ENCODE measurements at regions of chr12 and their contacts with region 1.

Region 1: GRCh38 chr12:89352492-89353187 is at the start of gene DUSP6:
- DNase-seq: peak; percentile 99
- H3K4me3 Mint-ChIP-seq: peak within 1 kb of the TSS; percentile 82
- H3K27ac Mint-ChIP-seq: peak within 1 kb of the TSS; percentile 96
- H3K4me1 Mint-ChIP-seq: peaks cover 40% of the 10 kb centered on the region
- H3K27me3 Mint-ChIP-seq: no peaks in the 10 kb centered on the region
- CTCF ChIP-seq: no peak
- total RNA-seq, gene DUSP6: 99.9 and 149 TPM in 2 replicates

Region 2: DNA sequence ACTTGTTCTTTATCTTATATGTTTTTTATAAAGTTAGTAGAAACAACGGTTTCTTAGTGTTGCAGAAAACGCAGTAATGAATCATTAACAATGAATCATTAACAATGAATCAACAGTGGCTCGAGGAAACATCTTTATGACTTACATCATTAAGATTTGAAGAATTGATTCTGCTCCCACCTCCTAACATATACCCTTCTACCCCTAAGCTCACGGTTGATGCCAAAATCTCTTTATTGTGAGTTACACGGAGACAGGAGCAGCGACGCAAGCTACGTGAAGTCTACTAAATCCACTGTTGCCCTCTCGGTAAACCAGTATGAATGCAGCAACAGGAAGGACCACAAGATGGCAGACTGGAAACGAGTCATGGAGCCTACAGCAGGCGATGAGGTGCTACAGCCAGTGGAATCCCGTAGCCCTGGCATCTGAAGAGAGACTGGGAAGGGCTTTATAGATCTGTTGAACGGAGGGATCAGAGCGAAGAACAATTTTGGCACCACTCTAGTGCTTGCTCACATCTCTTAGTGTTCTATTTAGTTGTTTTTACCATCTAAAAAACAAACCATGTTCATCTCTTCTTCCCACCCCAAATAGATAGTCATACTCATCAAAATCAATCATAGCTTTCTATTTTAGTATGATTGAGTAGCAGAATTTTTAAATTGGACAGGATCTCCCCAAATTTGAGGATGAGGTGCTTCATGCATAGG is 333.1 kb before region 1 on chr12:
- CTCF ChIA-PET with region 1: interaction called, 5 read pairs
- POLR2A ChIA-PET with region 1: interaction called, 4 read pairs
- intact Hi-C with region 1: loop called (anchors 1 kb)
- DNase-seq: peak; percentile 90
- H3K4me3 Mint-ChIP-seq: no peak overlapping the region
- H3K27ac Mint-ChIP-seq: no peak overlapping the region
- H3K4me1 Mint-ChIP-seq: peaks cover 12% of the 10 kb centered on the region
- H3K27me3 Mint-ChIP-seq: no peaks in the 10 kb centered on the region
- CTCF ChIP-seq: peak; percentile 81

Region 3: DNA sequence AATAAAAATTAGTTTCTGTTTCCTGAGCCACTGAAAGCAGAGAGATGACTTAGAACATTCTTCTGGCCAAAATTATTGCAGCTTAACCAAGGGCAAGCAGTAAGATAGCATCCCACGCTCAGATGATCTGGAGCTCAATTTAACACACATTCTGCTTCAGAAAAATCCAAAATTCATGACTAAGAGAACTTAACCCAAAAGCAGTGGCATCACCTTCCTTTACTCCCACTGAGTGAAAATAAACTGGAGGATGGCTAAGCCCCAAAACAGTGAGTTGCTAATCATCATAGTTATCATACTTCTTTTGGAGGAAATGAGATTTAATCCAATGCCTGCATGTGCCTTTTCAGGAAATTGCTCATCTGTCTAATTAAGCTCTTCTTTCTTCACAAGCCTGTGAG is 195.8 kb before region 1 on chr12:
- CTCF ChIA-PET with region 1: interaction called, 4 read pairs
- POLR2A ChIA-PET with region 1: interaction called, 138 read pairs
- intact Hi-C with region 1: loop called (anchors 1 kb)
- DNase-seq: no peak
- H3K4me3 Mint-ChIP-seq: no peak overlapping the region
- H3K27ac Mint-ChIP-seq: peak overlapping the region; percentile 2
- H3K4me1 Mint-ChIP-seq: peaks cover 16% of the 10 kb centered on the region
- H3K27me3 Mint-ChIP-seq: no peaks in the 10 kb centered on the region
- CTCF ChIP-seq: no peak

Region 4: GRCh38 chr12:89212339-89212771 is 140.3 kb before region 1 on chr12:
- CTCF ChIA-PET with region 1: no interaction called
- POLR2A ChIA-PET with region 1: interaction called, 19 read pairs
- intact Hi-C with region 1: no loop called
- DNase-seq: peak; percentile 72
- H3K4me3 Mint-ChIP-seq: no peak overlapping the region
- H3K27ac Mint-ChIP-seq: peak overlapping the region; percentile 83
- H3K4me1 Mint-ChIP-seq: peaks cover 57% of the 10 kb centered on the region
- H3K27me3 Mint-ChIP-seq: no peaks in the 10 kb centered on the region
- CTCF ChIP-seq: no peak

Region 5: DNA sequence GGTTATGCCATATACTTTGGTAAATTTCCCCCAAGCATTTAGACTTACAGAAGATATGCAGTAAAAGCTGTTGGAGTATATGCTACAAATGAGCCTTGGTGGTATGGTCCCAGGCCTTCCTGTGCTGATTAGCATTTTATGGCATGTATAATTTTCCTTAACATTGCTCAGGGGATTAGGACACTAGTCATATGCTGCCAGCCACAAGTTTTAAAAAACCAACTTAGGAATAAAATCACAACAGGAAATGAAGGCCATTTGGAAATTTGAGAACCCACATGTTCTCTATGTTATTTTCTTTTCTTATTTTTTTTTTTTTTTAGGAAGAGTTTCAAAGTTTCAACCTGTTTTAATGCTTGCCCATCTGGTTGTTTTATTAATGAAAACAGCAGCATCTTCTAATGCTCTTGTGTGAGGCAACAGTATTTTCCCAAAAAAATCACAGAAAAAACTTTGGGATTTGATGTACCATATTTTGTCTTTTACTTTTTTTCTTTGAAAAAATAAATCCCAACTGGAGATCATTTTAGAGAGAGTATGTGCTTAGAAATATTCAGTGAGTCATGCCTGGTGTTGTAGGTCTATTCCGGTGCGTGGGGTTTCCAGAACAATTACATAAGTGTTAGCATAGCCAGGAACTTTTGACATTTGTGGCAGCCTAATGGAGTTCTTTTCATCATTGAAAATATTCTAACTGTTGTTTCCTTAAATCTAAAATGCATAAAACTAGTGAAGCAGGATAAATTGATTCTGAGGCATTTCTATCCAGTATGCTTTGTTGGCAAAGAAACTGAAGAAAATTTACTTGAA is 21.3 kb after region 1 on chr12:
- CTCF ChIA-PET with region 1: interaction called, 7 read pairs
- POLR2A ChIA-PET with region 1: interaction called, 66 read pairs
- intact Hi-C with region 1: loop called (anchors 2 kb)
- DNase-seq: peak; percentile 83
- H3K4me3 Mint-ChIP-seq: no peak overlapping the region
- H3K27ac Mint-ChIP-seq: peak overlapping the region; percentile 49
- H3K4me1 Mint-ChIP-seq: peaks cover 53% of the 10 kb centered on the region
- H3K27me3 Mint-ChIP-seq: no peaks in the 10 kb centered on the region
- CTCF ChIP-seq: no peak

Region 6: GRCh38 chr12:89524541-89525285 is 172.1 kb after region 1 on chr12 and contains the start of gene GALNT4:
- CTCF ChIA-PET with region 1: interaction called, 5 read pairs
- POLR2A ChIA-PET with region 1: interaction called, 26 read pairs
- intact Hi-C with region 1: loop called (anchors 1 kb)
- DNase-seq: peak; percentile 91
- H3K4me3 Mint-ChIP-seq: peak within 1 kb of the TSS; percentile 99
- H3K27ac Mint-ChIP-seq: peak within 1 kb of the TSS; percentile 79
- H3K4me1 Mint-ChIP-seq: peaks cover 29% of the 10 kb centered on the region
- H3K27me3 Mint-ChIP-seq: no peaks in the 10 kb centered on the region
- CTCF ChIP-seq: peak; percentile 73
- total RNA-seq, gene GALNT4: 2.6 and 2.8 TPM in 2 replicates

Measured in MCF 10A (cell line).